Psoas muscle (tissue), 8 donors: ENCODE measurements at regions of chr12 and their contacts with region 1.

Region 1: DNA sequence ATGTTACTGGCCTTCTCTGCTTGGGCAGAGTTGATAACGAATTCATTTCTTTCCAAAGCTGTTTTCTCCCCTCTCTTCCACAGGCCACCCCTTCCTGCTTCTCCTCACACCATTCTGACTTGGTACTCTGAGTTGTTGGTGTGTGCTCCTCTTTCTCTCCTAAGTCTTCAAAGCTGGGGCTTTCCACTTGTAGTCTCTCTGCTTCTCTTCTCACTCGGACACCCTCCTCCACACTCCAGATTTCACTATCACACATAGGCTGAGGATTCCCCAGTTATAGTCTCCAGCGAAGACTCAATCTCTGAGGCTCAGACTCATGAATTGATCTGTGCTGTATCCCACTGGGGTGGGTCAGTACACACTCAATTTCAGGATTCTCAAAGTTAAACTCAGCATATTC is 201.0 kb downstream of the SSPN start:
- DNase-seq: no peak
- ATAC-seq: no peak
- H3K4me3 ChIP-seq: no peak overlapping the region
- H3K27ac ChIP-seq: no peak overlapping the region
- H3K4me1 ChIP-seq: no peaks in the 10 kb centered on the region
- H3K27me3 ChIP-seq: no peaks in the 10 kb centered on the region
- CTCF ChIP-seq: no peak

Region 2: DNA sequence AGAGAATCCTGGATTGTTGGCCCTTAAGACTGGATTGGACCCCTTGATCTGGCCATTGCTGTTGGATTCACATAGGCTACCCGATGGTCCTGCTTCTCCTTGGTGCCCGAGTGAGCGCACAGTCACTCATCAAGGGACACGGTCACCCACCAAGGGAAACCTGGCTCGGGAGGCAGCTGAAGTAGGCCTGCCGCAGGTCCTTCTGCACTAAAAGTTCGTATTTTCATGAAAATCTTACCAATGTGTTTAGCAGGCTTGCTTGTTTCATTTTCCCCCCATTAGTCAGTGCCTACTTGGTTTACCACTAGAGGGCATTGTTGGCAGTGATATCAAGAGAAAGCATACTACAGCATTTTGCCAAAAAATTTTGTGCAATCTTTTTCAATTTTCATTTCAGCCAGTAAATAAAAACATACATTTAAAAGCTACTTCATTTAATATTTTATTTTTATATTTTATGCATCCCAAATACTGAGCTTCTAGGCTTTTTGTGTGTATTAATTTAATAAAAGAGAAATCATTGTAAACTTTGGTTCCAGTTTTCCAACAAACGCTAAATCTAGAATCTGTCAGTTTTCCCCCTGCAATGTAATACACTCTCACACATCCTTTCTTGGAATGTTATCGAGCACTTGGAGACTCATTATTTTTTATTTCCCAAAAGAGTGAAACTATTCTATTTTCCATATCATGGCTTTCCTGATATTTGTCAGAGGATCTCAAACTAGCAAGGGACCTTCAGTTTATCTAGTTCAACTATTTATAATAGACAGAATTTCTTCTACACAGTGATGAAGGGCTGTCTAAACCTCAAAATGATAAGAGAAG is 960.0 kb before region 1 on chr12:
- intact Hi-C with region 1: loop called in 1 of 2 experiments (anchors 10 kb)
- DNase-seq: peak in 1 of 2 donors; percentile 45
- ATAC-seq: peak in 3 of 4 donors; percentile 49 to 90 (median 74)
- H3K4me3 ChIP-seq: peak overlapping the region; percentile 62
- H3K27ac ChIP-seq: no peak overlapping the region
- H3K4me1 ChIP-seq: no peaks in the 10 kb centered on the region
- H3K27me3 ChIP-seq: no peaks in the 10 kb centered on the region
- CTCF ChIP-seq: peak; percentile 79